Psoas muscle (tissue), 8 donors: ENCODE measurements at regions of chr19 and their contacts with region 1.

Region 1: DNA sequence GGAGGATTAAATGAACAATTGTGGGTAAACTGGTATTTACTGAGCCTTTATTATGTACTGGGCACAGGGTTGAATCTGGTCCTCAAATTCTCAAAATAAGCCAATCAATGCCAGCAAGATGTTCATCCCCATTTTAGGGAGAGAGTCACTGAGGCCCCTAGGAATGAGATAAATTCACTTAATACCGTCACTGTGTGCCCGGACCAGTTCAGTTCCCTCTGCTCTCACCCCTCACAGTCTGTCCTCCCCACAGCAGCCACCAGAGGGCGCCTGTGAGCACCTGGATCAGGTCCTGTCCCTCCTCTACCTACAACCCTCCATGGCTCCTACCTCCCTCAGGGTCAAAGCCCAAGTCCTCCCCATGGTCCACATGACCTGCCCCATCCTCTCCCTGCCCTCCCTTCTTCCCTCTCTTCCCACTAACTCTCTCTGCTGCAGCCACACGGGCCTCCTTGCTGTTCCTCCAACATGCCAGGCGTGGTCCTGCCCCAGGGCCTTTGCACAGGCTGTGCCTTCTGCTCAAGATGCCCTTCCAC is 42.0 kb upstream of the NFIC start:
- DNase-seq: peak; percentile 63 to 80
- ATAC-seq: peak in 3 of 4 donors; percentile 44 to 53 (median 53)
- H3K4me3 ChIP-seq: no peak overlapping the region
- H3K27ac ChIP-seq: no peak overlapping the region
- H3K4me1 ChIP-seq: peaks cover 6% of the 10 kb centered on the region
- H3K27me3 ChIP-seq: peaks cover 0 to 18% (median 11%) of the 10 kb centered on the region in 3 donors
- CTCF ChIP-seq: peak; percentile 58

Region 2: DNA sequence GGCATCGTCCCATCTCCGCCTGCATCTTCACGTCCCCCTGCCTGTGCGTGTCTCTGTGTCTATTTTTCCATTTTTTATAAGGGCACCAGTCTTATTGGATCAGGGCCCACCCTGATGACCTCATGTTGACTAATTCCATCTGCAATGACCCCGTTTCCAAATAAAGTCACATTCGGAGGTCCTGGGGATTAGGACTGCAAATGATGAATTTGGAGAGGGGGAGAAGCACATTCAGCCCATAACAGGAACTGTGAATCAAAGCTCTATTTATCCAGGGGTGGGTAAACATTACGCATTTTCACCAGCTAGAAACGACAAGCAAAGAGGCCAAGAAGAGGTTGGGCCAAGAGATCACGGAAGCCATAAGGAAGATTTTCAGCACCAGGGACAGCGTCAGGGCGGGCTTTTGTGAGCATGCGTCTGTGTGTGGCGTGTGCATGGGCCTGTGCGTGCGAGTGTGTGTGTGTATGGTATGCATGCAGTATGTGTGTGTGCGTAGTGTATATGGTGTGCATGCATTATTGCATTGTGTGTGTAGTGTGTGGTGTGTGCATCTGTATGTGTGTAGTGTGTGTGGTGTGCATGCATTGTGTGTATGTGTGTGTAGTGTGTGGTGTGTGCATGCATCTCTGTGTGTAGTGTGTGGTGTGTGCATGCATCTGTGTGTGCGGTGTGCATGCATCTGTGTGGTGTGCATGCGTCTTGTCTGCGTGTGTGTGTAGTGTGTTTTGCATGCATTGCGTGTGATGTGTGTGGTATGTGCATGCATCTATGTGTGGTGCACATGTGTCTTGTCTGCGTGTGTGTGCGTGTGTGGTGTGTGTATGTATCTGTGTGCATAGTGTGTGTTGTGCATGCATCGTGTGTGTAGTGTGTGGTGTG is 80.3 kb before region 1 on chr19:
- intact Hi-C with region 1: no loop called
- DNase-seq: peak in 1 of 2 donors; percentile 26
- ATAC-seq: no peak
- H3K4me3 ChIP-seq: no peak overlapping the region
- H3K27ac ChIP-seq: no peak overlapping the region
- H3K4me1 ChIP-seq: no peaks in the 10 kb centered on the region
- H3K27me3 ChIP-seq: peaks cover 0 to 12% (median 2%) of the 10 kb centered on the region in 3 donors
- CTCF ChIP-seq: no peak

Region 3: DNA sequence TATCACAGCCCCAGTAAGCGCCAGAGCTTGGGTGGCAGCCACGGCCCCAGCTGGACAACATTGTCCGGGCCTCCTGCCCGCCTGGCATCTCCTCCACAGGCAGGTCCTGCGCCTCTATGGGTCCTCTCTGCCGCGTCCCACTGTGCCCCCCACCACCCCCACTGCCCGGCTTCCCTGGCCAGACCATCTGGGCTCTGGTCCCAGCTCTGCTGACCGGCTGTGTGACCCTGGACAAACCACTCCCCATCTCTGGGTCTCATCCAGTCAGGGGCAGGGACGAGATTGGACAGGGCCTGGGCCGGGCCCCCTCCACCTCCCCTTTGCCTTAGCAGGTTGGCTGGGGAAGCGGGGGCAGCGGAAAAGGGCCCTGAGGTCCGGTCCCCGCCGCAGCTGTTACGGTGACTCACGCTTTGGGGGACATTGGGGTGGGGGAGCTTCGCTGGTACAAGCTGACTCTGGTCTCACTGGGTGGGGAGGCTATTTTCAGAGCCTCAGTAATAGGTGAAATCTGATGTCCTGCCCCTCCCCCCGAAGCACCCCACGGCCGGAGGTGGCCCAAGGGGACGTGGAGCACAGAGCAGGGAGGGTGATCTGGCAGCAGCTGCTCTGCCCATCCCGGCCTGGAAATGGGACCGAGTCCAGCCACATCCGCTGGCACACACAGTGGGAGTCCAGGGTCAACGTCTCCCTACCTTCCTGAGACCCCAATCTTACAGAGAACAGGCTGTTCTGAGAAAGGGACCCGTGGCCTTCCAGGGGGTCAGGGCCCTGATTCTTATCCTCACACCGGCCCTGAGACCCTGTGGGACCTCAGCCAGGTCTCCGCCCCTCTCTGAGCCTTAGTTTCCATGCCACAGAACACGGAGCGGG is 51.1 kb after region 1 on chr19:
- intact Hi-C with region 1: no loop called
- DNase-seq: peak; percentile 97 to 99
- ATAC-seq: peak; percentile 81 to 86 (median 83)
- H3K4me3 ChIP-seq: peak overlapping the region; percentile 41
- H3K27ac ChIP-seq: peak overlapping the region; percentile 93
- H3K4me1 ChIP-seq: peaks cover 46% of the 10 kb centered on the region
- H3K27me3 ChIP-seq: no peaks in the 10 kb centered on the region
- CTCF ChIP-seq: no peak

Region 4: GRCh38 chr19:3429581-3430080 is 105.2 kb after region 1 on chr19:
- intact Hi-C with region 1: loop called in 1 of 2 experiments (anchors 1 kb)
- DNase-seq: peak; percentile 96 to 98
- ATAC-seq: peak; percentile 81 to 92 (median 89)
- H3K4me3 ChIP-seq: peak overlapping the region; percentile 2
- H3K27ac ChIP-seq: peak overlapping the region; percentile 90
- H3K4me1 ChIP-seq: peaks cover 47% of the 10 kb centered on the region
- H3K27me3 ChIP-seq: no peaks in the 10 kb centered on the region
- CTCF ChIP-seq: peak; percentile 100

Region 5: GRCh38 chr19:3471954-3472655 is 147.7 kb after region 1 on chr19:
- intact Hi-C with region 1: loop called (anchors 1 to 2 kb)
- DNase-seq: peak; percentile 56 to 76
- ATAC-seq: peak; percentile 44 to 60 (median 53)
- H3K4me3 ChIP-seq: no peak overlapping the region
- H3K27ac ChIP-seq: no peak overlapping the region
- H3K4me1 ChIP-seq: no peaks in the 10 kb centered on the region
- H3K27me3 ChIP-seq: peaks cover 0 to 4% (median 2%) of the 10 kb centered on the region in 3 donors
- CTCF ChIP-seq: peak; percentile 79

Region 6: GRCh38 chr19:3721131-3721886 is 396.9 kb after region 1 on chr19:
- intact Hi-C with region 1: no loop called
- DNase-seq: peak; percentile 74 to 85
- ATAC-seq: peak; percentile 56 to 73 (median 63)
- H3K4me3 ChIP-seq: peak overlapping the region; percentile 12
- H3K27ac ChIP-seq: no peak overlapping the region
- H3K4me1 ChIP-seq: no peaks in the 10 kb centered on the region
- H3K27me3 ChIP-seq: peaks cover 0 to 53% (median 20%) of the 10 kb centered on the region in 3 donors
- CTCF ChIP-seq: no peak